IMR-90 (cell line): ENCODE measurements at regions of chr7 and their contacts with region 1.

Region 1: DNA sequence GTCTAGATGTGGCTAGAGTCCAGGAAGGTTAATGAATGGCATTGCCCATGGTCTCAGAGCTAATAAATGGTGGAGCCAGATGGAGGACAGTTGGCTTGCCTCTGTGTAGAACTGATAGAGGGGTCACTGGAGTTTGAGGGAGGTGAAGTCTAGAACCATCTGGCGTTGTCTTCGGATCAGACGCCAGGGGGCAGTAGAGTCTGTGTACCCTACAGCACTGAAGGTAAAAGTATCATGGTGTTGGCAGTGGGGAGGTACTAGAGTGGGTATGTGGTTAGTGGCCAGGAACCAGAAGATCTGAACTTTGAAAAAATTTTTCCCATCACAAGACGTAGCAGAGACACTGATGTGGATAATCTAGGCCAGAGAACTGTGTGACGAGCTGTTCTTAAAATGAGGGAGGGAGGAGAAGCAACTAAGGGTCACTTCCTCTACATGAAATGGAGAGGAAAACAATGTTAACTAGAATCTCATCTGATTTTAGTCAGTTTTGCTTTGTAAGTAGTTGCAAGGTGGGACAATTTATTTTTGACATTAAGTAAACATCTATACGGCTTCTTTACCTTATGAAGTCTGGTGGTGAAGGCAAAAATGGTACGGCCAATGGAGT is 227.9 kb upstream of the PRSS58 start:
- DNase-seq: no peak
- ATAC-seq: no peak
- H3K4me3 ChIP-seq: no peak overlapping the region
- H3K27ac ChIP-seq: no peak overlapping the region
- H3K4me1 ChIP-seq: peaks cover 2% of the 10 kb centered on the region
- H3K27me3 ChIP-seq: peaks cover 2% of the 10 kb centered on the region; the same call in 1 of the 2 replicates
- CTCF ChIP-seq: peak; percentile 44
- POLR2A ChIP-seq: no peak
- RAD21 ChIP-seq: no peak

Region 2: DNA sequence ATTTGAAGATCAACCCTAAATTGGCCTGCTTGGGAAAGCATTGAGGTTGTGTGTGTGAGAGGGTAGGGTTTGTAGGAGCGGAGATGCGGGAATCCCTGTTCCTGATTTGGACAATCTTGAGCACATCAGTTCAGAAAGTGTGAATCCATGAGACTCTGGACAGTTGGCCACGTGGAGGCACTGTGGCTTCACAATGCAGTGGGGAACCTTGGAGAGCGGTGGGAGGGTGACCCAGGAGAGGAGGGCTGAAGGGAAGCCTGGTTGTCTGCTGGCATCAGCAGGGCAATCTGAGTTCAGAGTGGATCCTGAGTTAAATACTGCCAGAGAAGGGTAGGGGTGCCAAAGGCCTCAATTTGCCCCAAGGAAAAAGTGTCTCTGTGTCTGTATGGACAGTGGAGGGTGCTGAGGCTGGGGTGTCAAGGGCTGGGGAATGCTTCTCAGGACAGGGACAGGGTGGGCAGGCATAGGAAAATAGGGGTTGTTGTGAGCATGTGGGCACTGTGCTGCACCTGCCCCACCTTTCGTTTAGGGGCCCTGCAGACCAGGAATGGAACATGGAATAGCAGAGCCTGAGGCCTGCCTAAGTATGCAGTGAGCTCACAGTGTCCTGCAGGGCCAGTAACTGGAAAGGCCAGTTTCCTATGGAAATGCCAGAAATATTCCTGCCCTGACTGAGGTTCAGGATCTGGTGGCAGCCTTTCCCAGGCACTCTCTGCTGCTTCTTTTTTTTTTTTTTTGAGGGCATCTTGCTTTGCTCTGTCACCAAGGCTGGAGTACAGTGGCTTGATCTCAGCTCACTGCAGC is 65.0 kb before region 1 on chr7:
- CTCF ChIA-PET with region 1: interaction called, 10 read pairs
- POLR2A ChIA-PET with region 1: no interaction called
- dilution Hi-C with region 1: no loop called
- in situ Hi-C with region 1: no loop called
- intact Hi-C with region 1: loop called (anchors 1 kb)
- DNase-seq: peak; percentile 57
- ATAC-seq: peak; percentile 96
- H3K4me3 ChIP-seq: no peak overlapping the region
- H3K27ac ChIP-seq: no peak overlapping the region
- H3K4me1 ChIP-seq: no peaks in the 10 kb centered on the region
- H3K27me3 ChIP-seq: no peaks in the 10 kb centered on the region; the same call in 1 of the 2 replicates
- CTCF ChIP-seq: peak; percentile 76
- POLR2A ChIP-seq: no peak
- RAD21 ChIP-seq: peak; percentile 79

Region 3: DNA sequence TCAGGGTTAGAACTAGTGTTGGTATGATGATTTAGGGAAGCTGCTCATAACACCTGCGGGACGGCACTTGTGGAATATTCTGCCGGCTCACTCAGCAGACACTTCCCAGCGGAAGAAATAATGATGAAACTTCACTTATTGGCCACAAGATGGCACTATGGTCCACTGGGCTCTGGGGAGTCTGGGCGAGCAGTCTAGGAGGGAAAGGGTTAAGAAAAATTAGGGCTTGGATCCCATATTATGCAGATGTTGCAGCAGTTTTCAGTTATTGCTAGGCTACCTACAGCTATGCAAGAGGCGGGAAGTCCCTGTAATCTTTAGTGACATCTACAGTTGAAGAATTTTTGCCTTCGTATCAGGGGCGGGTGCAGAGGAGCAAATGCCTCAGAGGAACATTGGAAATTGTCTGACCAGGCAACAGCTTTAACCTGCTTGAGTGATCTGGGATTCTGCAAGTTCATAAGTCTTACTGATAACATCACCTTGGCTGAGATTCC is 10.9 kb after region 1 on chr7:
- CTCF ChIA-PET with region 1: interaction called, 15 read pairs
- POLR2A ChIA-PET with region 1: no interaction called
- dilution Hi-C with region 1: no loop called
- in situ Hi-C with region 1: no loop called
- intact Hi-C with region 1: no loop called
- DNase-seq: peak; percentile 54
- ATAC-seq: peak; percentile 50
- H3K4me3 ChIP-seq: no peak overlapping the region
- H3K27ac ChIP-seq: no peak overlapping the region
- H3K4me1 ChIP-seq: peaks cover 8% of the 10 kb centered on the region
- H3K27me3 ChIP-seq: 0 out of 2 replicates have a peak, but pooled peaks cover 1% of the 10 kb centered on the region
- CTCF ChIP-seq: peak; percentile 68
- POLR2A ChIP-seq: no peak
- RAD21 ChIP-seq: peak; percentile 53